Tibial artery (tissue), 4 donors: ENCODE measurements at regions of chr3 and their contacts with region 1.

Region 1: DNA sequence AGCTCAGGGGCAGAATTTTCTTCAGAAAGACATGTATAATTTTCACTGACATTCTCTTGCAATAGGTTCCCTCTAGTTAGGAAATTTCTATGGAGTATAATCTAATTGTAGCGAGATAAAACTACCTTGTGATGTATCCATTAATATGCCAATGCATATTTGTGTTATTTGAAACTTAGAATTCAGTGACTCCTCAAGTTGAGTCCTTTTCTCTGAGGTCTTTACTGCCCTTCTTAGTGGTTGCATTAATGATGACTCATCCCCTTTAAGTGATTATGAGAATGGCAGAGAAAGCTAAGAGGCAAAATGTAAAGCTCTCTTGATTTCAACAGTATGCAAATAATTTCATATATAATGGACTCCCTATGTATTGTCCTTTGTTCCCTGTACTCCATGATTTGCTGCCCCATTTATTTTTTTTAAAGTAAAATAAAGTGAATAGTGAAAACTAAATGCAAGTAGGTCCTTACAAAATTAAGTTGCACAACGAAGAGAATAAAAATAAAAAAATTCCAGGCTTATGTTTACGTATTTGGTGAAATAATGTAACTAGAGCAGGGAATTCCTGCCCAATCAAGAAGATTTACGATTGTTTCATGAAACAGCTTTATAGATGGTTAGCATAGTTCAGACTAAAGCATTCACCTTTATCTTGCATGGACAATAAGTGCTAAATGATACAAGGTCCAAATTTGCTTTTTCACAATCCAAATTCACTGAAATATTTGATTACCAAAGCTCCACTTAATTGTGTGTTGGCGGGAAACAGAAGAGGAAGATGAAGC is 78.1 kb downstream of the ZPLD1 start:
- DNase-seq: no peak
- H3K4me3 ChIP-seq: no peak overlapping the region
- H3K27ac ChIP-seq: no peak overlapping the region
- H3K4me1 ChIP-seq: no peaks in the 10 kb centered on the region
- H3K27me3 ChIP-seq: no peaks in the 10 kb centered on the region
- CTCF ChIP-seq: no peak

Region 2: GRCh38 chr3:100641471-100642032 is 1871.4 kb before region 1 on chr3:
- intact Hi-C with region 1: loop called (anchors 10 kb)
- DNase-seq: no peak
- H3K4me3 ChIP-seq: no peak overlapping the region
- H3K27ac ChIP-seq: no peak overlapping the region
- H3K4me1 ChIP-seq: no peaks in the 10 kb centered on the region
- H3K27me3 ChIP-seq: no peaks in the 10 kb centered on the region
- CTCF ChIP-seq: no peak

Region 3: DNA sequence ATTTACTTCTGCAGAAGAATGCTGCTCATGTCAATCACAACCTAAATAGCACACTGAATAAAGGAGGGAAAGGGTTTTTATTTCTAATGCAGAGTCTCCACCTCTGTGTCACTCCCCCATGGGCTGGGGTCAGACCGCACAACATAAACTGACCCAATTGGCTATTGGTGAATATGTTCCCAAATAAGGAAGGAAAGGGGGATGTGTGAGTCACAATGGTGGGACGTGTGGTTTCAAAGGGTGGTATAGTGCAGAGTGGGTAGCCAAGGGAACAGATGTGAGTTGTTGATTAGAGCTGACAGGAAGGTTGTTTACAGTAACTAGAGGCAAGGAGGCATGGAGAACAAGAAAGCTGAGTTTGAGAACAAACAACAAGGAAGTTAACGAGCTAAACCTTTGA is 413.7 kb after region 1 on chr3:
- intact Hi-C with region 1: no loop called
- DNase-seq: no peak
- H3K4me3 ChIP-seq: no peak overlapping the region
- H3K27ac ChIP-seq: no peak overlapping the region
- H3K4me1 ChIP-seq: no peaks in the 10 kb centered on the region
- H3K27me3 ChIP-seq: no peaks in the 10 kb centered on the region
- CTCF ChIP-seq: no peak